A673 (cell line): ENCODE measurements at regions of chr11 and their contacts with region 1.

Region 1: GRCh38 chr11:859509-860131 is 17.0 kb downstream of the TSPAN4 start:
- DNase-seq: peak; percentile 92
- H3K4me3 ChIP-seq: peak overlapping the region; percentile 53
- H3K27ac ChIP-seq: peak overlapping the region; percentile 60
- H3K4me1 ChIP-seq: peaks cover 15% of the 10 kb centered on the region
- H3K27me3 ChIP-seq: no peaks in the 10 kb centered on the region
- CTCF ChIP-seq: no peak

Region 2: GRCh38 chr11:975827-976226 is 116.2 kb after region 1 on chr11:
- CTCF ChIA-PET with region 1: no interaction called
- POLR2A ChIA-PET with region 1: no interaction called
- intact Hi-C with region 1: loop called (anchors 10 kb)
- DNase-seq: peak; percentile 62
- H3K4me3 ChIP-seq: no peak overlapping the region
- H3K27ac ChIP-seq: no peak overlapping the region
- H3K4me1 ChIP-seq: no peaks in the 10 kb centered on the region
- H3K27me3 ChIP-seq: no peaks in the 10 kb centered on the region
- CTCF ChIP-seq: peak; percentile 56

Region 3: GRCh38 chr11:1050581-1051355 is 191.1 kb after region 1 on chr11:
- CTCF ChIA-PET with region 1: no interaction called
- POLR2A ChIA-PET with region 1: interaction called, 13 read pairs
- intact Hi-C with region 1: no loop called
- DNase-seq: peak; percentile 69
- H3K4me3 ChIP-seq: no peak overlapping the region
- H3K27ac ChIP-seq: no peak overlapping the region
- H3K4me1 ChIP-seq: no peaks in the 10 kb centered on the region
- H3K27me3 ChIP-seq: no peaks in the 10 kb centered on the region
- CTCF ChIP-seq: peak; percentile 88